ENCODE measurements at regions of chr6 and their contacts with region 1.

Region 1: GRCh38 chr6:143842902-143843676 is at the start of gene LTV1:
- DNase-seq: peak; percentile 82 to 98
- H3K4me3 ChIP-seq: peak within 1 kb of the TSS; percentile 76 to 79
- H3K27ac ChIP-seq: peak within 1 kb of the TSS; percentile 92 to 96
- H3K4me1 ChIP-seq: peaks cover 4 to 17% of the 10 kb centered on the region in 2 donors
- H3K27me3 ChIP-seq: no peaks in the 10 kb centered on the region
- CTCF ChIP-seq: no peak
- total RNA-seq, gene LTV1: 4.6 TPM

Region 2: GRCh38 chr6:143575440-143575839 is 267.6 kb before region 1 on chr6:
- intact Hi-C with region 1: loop called (anchors 1 kb)
- DNase-seq: peak in 1 of 2 donors; percentile 72
- H3K4me3 ChIP-seq: no peak overlapping the region
- H3K27ac ChIP-seq: no peak overlapping the region
- H3K4me1 ChIP-seq: peaks cover 3 to 5% of the 10 kb centered on the region in 2 donors
- H3K27me3 ChIP-seq: no peaks in the 10 kb centered on the region
- CTCF ChIP-seq: peak; percentile 81 to 90 (median 90)

Region 3: DNA sequence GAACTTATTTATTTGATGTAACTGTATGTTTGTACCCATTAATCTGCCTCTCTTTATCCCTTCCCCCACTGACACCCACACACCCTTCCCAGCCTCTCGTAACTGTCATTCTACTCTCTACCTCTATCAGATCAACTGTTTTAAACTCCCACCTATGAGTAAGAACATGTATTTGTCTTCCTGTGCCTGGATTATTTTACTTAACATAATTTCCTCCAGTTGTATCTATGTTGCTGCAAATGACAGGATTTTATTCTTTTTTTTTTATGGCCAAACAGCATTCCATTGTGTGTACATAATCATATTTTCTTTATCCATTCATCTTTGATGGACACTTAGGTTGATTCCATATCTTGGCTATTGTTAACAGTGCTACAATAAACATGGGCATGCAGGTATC is 116.1 kb before region 1 on chr6:
- intact Hi-C with region 1: no loop called
- DNase-seq: no peak
- H3K4me3 ChIP-seq: no peak overlapping the region
- H3K27ac ChIP-seq: no peak overlapping the region
- H3K4me1 ChIP-seq: no peaks in the 10 kb centered on the region
- H3K27me3 ChIP-seq: no peaks in the 10 kb centered on the region
- CTCF ChIP-seq: no peak

Region 4: GRCh38 chr6:143745166-143746133 is 97.6 kb before region 1 on chr6:
- intact Hi-C with region 1: loop called (anchors 2 kb)
- DNase-seq: peak in 1 of 2 donors; percentile 70
- H3K4me3 ChIP-seq: peak overlapping the region; percentile 41 to 44
- H3K27ac ChIP-seq: peak overlapping the region; percentile 80 to 86
- H3K4me1 ChIP-seq: peaks cover 9 to 39% of the 10 kb centered on the region in 2 donors
- H3K27me3 ChIP-seq: no peaks in the 10 kb centered on the region
- CTCF ChIP-seq: no peak

Region 5: DNA sequence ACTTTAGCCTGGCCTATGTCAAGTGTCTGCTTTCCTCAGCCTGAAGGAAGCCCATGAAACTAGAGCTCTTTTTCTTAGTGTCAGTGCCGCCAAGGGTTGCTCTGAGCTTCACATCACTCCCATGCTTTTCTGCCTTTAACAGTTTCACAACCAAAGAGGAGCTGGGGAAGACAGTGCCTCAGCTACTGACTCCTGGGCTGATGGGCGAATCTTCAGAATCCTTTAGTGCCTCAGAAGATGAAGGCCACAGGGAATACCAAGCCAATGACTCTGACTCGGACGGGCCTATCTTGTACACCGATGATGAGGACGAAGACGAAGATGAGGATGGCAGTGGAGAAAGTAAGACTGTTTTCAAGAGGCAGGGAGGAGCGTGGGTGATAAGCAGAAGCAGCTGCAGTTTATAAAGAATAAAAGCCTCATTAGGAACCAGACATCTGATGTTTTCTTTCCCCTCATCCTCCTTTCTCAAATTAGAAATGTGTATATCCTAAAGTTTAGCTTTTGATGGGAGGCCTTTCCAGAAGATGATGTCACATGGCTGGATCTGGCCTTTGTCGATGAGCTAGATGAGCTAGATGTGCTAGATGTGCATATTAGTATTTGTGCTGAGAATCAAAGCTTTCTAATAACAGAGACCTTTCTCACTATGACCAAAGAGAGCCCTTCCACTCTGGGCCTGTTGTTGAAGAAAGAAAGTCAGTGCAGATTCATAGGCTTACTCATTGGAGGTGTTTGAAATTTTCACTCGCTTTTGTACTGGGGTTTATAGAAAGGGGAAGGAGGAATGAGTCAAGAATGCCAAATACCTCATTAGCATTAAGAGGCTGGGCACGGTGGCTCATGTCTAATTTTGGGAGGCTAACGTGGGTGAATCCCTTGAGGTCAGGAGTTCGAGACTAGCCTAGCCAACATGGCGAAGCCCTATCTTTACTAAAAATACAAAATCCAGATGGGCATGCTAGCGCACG is 70.7 kb before region 1 on chr6:
- intact Hi-C with region 1: no loop called
- DNase-seq: no peak
- H3K4me3 ChIP-seq: no peak overlapping the region
- H3K27ac ChIP-seq: no peak overlapping the region
- H3K4me1 ChIP-seq: peaks cover 12 to 19% of the 10 kb centered on the region in 2 donors
- H3K27me3 ChIP-seq: no peaks in the 10 kb centered on the region
- CTCF ChIP-seq: no peak

Region 6: GRCh38 chr6:143859888-143860660 is 17.0 kb after region 1 on chr6:
- intact Hi-C with region 1: no loop called
- DNase-seq: no peak
- H3K4me3 ChIP-seq: no peak overlapping the region
- H3K27ac ChIP-seq: no peak overlapping the region
- H3K4me1 ChIP-seq: no peaks in the 10 kb centered on the region
- H3K27me3 ChIP-seq: no peaks in the 10 kb centered on the region
- CTCF ChIP-seq: no peak

Region 7: GRCh38 chr6:144013486-144013909 is 170.4 kb after region 1 on chr6:
- intact Hi-C with region 1: loop called (anchors 5 kb)
- DNase-seq: peak in 1 of 2 donors; percentile 87
- H3K4me3 ChIP-seq: no peak overlapping the region
- H3K27ac ChIP-seq: no peak overlapping the region
- H3K4me1 ChIP-seq: no peaks in the 10 kb centered on the region
- H3K27me3 ChIP-seq: no peaks in the 10 kb centered on the region
- CTCF ChIP-seq: peak; percentile 82 to 92 (median 89)